ENCODE measurements at regions of chr21 and their contacts with region 1.

Region 1: GRCh38 chr21:34974162-34974981 is 74.7 kb downstream of the RUNX1 start:
- DNase-seq: peak; percentile 74 to 81 (median 79)
- H3K4me3 ChIP-seq: peak overlapping the region in 1 of 2 donors; percentile 21
- H3K4me3 Mint-ChIP-seq: peak overlapping the region; percentile 38 to 92 (median 83)
- H3K27ac ChIP-seq: peak overlapping the region; percentile 37
- H3K27ac Mint-ChIP-seq: peak overlapping the region; percentile 84 to 98 (median 93)
- H3K4me1 ChIP-seq: peaks cover 82% of the 10 kb centered on the region
- H3K4me1 Mint-ChIP-seq: peaks cover 72 to 94% (median 82%) of the 10 kb centered on the region in 4 donors
- H3K27me3 ChIP-seq: no peaks in the 10 kb centered on the region
- H3K27me3 Mint-ChIP-seq: no peaks in the 10 kb centered on the region

Region 2: DNA sequence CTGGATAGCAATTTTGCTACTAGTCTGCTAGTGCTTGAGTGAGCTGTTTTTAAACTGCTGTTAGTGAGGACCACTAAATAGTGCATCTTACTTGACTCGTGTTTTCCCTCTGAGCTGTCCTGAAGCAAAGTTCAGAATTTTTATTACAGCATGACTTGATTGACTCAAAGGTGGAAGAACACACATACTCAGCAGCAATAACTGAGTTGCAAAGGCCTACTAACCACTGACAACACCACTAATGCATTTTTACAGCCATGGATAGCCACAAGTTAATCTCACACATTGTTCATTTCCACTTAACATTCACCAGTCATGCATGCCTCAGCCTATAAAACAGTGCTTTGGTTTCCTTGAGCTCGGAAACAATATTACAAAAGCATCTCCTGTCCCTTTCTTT is 74.0 kb before region 1 on chr21:
- CTCF ChIA-PET with region 1: no interaction called
- POLR2A ChIA-PET with region 1: no interaction called
- intact Hi-C with region 1: loop called (anchors 2 kb)
- DNase-seq: no peak
- H3K4me3 ChIP-seq: no peak overlapping the region
- H3K4me3 Mint-ChIP-seq: no peak overlapping the region
- H3K27ac ChIP-seq: no peak overlapping the region
- H3K27ac Mint-ChIP-seq: no peak overlapping the region
- H3K4me1 ChIP-seq: peaks cover 16% of the 10 kb centered on the region
- H3K4me1 Mint-ChIP-seq: peaks cover 31 to 45% (median 39%) of the 10 kb centered on the region in 4 donors
- H3K27me3 ChIP-seq: no peaks in the 10 kb centered on the region
- H3K27me3 Mint-ChIP-seq: no peaks in the 10 kb centered on the region

Region 3: DNA sequence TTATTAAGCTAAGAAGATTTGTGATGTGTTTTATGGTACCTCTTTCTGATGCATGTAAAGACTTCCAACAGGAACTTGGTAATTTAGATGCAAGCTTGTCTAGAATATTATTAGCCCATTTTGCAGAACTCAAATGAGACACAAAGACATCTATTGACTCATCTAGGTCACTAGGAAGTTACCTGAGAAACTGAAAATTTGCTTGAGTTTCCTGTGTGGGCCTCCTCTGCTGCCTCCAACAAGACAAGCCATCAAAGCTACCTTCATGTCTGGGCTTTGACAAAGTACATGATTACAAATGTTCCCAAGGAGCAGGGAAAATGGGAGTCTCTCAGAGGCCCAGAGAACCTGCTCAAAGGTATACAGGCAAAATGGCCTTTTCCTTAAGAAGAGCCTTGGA is 69.2 kb after region 1 on chr21:
- CTCF ChIA-PET with region 1: interaction called, 4 read pairs
- POLR2A ChIA-PET with region 1: interaction called, 22 read pairs
- intact Hi-C with region 1: loop called (anchors 2 kb)
- DNase-seq: peak in 4 of 5 donors; percentile 55 to 65 (median 59)
- H3K4me3 ChIP-seq: peak overlapping the region in 1 of 2 donors; percentile 73
- H3K4me3 Mint-ChIP-seq: peak overlapping the region; percentile 84 to 99 (median 96)
- H3K27ac ChIP-seq: peak overlapping the region; percentile 82
- H3K27ac Mint-ChIP-seq: peak overlapping the region; percentile 92 to 100 (median 99)
- H3K4me1 ChIP-seq: peaks cover 77% of the 10 kb centered on the region
- H3K4me1 Mint-ChIP-seq: peaks cover 58 to 98% (median 72%) of the 10 kb centered on the region in 4 donors
- H3K27me3 ChIP-seq: no peaks in the 10 kb centered on the region
- H3K27me3 Mint-ChIP-seq: peaks cover 1 to 3% of the 10 kb centered on the region in 2 donors

Measured in CD4-positive, alpha-beta memory T cell (primary cell).